ENCODE measurements at regions of chr14 and their contacts with region 1.

Region 1: GRCh38 chr14:74618078-74618952 is 6.3 kb upstream of the LTBP2 start:
- DNase-seq: peak; percentile 40
- H3K4me3 Mint-ChIP-seq: no peak overlapping the region
- H3K27ac Mint-ChIP-seq: peak overlapping the region; percentile 24
- H3K4me1 Mint-ChIP-seq: peaks cover 65% of the 10 kb centered on the region
- H3K27me3 Mint-ChIP-seq: peaks cover 25% of the 10 kb centered on the region

Region 2: DNA sequence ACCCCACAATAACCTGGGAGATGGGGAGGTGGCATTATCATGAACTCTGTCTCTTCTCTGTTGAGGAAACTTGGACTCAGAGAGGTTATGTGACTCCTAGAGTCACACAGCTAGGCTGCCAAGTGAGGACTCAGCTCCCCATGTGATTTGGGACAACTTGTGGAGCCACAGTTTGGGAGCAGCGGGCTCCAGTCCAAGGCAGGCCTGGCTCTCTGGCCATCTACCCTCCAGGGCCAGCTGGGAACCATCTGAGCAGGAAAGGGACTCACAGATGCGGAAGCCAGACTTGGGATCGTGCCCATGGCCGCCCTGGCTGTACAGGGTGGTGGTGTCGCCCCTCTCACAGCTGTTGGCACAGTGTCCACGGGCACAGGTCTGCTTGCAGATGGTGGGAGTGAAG is 65.7 kb before region 1 on chr14:
- intact Hi-C with region 1: no loop called
- DNase-seq: no peak
- H3K4me3 Mint-ChIP-seq: no peak overlapping the region
- H3K27ac Mint-ChIP-seq: no peak overlapping the region
- H3K4me1 Mint-ChIP-seq: no peaks in the 10 kb centered on the region
- H3K27me3 Mint-ChIP-seq: peaks cover 5% of the 10 kb centered on the region

Region 3: DNA sequence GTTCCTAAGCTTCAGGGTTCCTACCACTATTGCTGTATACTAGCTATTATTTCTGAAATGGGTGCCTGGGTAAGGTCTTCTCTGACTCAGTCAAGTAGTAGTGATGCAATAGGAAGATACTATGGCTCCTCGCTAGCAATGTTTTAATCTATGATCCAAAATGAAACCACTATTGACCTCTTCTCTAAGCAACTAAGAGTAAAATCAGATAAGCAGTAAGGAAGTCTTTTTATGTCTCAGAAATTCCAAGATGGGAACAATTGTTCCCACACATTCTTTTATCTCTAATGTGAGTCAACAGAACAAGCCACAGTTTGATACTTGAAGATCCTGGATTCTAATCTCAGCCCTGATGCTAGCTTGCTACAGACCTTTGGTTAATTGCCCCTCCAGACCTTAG is 49.4 kb after region 1 on chr14:
- intact Hi-C with region 1: loop called (anchors 5 kb)
- DNase-seq: no peak
- H3K4me3 Mint-ChIP-seq: no peak overlapping the region
- H3K27ac Mint-ChIP-seq: peak overlapping the region; percentile 67
- H3K4me1 Mint-ChIP-seq: peaks cover 20% of the 10 kb centered on the region
- H3K27me3 Mint-ChIP-seq: no peaks in the 10 kb centered on the region

Region 4: DNA sequence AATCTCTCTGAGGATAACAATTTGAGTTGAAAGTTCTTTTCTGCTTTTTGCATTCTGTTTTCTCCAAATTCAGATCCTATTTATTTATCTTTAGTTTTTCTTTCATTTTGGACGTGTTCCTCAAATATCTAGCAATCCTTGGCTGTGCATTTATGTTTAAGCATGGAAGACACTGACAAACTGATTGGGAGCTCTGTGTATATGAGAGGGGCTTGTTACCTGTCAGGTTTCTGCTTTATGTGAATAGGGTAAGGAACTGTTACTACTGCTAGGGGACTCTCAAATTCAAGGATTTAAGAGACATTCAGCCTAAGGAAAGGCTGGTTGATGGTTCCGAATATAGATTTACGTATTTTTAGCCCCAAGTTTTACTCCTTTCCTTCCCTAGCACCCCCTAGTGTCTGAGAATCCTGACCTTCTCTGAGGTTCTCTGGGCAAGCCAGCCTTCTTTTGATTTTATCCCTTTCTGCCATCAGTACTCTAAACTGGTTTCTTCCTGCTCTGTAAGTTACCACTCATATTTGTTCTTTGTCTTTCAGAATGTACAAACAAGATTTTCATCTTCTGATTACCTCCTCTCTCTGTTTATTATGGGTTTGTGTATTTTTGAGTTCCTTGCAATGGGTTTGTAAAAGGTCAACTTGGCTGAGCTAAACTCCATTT is 175.3 kb after region 1 on chr14:
- intact Hi-C with region 1: loop called (anchors 5 kb)
- DNase-seq: no peak
- H3K4me3 Mint-ChIP-seq: peak overlapping the region; percentile 63
- H3K27ac Mint-ChIP-seq: peak overlapping the region; percentile 79
- H3K4me1 Mint-ChIP-seq: peaks cover 39% of the 10 kb centered on the region
- H3K27me3 Mint-ChIP-seq: no peaks in the 10 kb centered on the region

Measured in activated T-helper 2 cell treated with anti-CD3 and anti-CD28 coated beads, Interferon-gamma antibody, Interleukin-2, Interleukin-4, amounts not matched to agents 10 μg/mL and 5 μg/mL and 100 μg/mL, durations not matched to agents 14 hours and 24 hours and 36 hours (primary cell).